ENCODE measurements at regions of chr1 and their contacts with region 1.

Region 1: DNA sequence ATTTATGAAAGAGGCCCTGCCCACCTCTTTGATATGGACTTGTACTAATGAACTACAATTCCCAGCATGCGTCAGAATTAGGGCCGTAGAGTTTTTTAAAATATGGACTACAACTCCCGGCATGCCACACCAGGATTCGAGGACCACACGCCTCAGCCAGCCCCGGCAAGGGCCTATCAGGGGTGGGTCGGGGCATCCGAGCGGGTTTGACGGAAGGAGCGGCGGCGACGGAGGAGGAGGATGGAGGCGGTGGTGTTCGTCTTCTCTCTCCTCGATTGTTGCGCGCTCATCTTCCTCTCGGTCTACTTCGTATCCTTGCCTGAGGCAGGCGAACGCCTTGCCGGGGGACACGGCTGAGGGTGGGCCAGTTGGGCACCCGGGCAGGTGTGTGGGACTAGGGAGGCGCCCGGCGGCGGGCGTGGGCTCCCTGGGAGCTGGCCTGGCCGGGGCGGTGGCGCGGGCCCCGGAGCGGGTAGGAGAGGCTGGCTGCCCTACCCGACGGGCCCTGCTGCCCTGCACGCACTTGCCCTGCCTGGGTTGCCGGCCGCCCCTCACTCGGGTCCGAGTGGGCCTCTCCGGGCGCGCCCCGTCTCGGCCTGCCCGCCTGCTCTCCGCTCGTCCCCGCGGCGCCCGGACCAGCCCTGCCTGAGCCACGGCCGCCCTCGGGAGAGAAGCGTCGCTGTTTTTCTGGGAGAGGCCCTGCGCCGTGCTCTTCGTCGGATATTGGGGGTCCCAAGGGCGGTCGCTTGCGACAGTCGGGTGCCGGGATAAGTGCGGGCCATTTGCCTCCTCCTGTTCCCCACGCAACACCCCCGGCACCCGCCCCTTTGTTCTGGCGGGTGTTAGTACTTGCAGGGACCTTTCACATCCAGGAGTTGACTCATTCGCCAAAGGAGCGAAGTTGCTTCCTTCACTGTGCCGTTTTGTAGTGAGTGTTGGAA is at the start of gene CNIH4:
- DNase-seq: peak; percentile 94
- ATAC-seq: peak; percentile 98
- H3K4me3 ChIP-seq: peak within 1 kb of the TSS; percentile 69 to 88 (median 82)
- H3K4me3 Mint-ChIP-seq: peak within 1 kb of the TSS; percentile 86
- H3K27ac ChIP-seq: peak within 1 kb of the TSS; percentile 34 to 61
- H3K27ac Mint-ChIP-seq: peak within 1 kb of the TSS; percentile 92
- H3K4me1 ChIP-seq: peaks cover 9 to 14% of the 10 kb centered on the region in 2 donors
- H3K4me1 Mint-ChIP-seq: peaks cover 22% of the 10 kb centered on the region
- H3K27me3 ChIP-seq: no peaks in the 10 kb centered on the region
- H3K27me3 Mint-ChIP-seq: no peaks in the 10 kb centered on the region
- CTCF ChIP-seq: no peak
- total RNA-seq, gene CNIH4: 27.2 and 31.5 TPM in 2 replicates

Region 2: GRCh38 chr1:224392411-224393249 is 35.7 kb after region 1 on chr1:
- CTCF ChIA-PET with region 1: no interaction called
- POLR2A ChIA-PET with region 1: no interaction called
- intact Hi-C with region 1: no loop called
- DNase-seq: no peak
- ATAC-seq: no peak
- H3K4me3 ChIP-seq: no peak overlapping the region
- H3K4me3 Mint-ChIP-seq: no peak overlapping the region
- H3K27ac ChIP-seq: no peak overlapping the region
- H3K27ac Mint-ChIP-seq: no peak overlapping the region
- H3K4me1 ChIP-seq: no peaks in the 10 kb centered on the region
- H3K4me1 Mint-ChIP-seq: no peaks in the 10 kb centered on the region
- H3K27me3 ChIP-seq: no peaks in the 10 kb centered on the region
- H3K27me3 Mint-ChIP-seq: no peaks in the 10 kb centered on the region
- CTCF ChIP-seq: no peak

Region 3: DNA sequence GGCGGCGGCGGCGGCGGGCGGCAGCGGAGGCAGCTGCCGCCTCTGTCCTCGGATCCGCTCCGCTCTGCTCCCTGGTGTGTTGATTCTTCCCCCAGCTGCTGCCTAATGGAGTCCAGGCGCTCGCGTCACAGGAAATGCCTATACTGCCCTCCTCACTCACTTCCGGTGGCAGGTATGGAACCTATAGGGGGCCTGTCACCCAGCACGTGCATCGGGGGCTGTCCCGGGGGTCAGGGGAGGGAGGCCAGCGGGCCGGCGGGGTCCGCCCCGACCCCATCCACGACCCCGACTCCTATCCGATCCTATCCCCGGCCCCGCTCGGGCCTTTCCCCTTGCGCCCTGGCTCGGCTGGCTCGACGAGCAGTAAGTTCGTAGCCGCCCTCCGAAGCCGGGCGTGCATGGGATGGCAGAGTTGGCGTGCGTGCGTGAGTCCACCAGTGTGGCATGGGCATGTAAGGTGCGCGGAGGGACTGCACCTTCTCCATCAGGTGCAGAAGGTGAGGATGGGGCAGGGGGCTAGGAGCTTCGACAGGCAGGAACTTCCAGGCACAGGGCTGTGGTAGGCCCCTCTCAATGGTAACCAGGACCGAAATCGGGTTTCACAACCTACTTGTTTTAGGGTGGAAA is 77.8 kb after region 1 on chr1 and contains the start of gene WDR26:
- CTCF ChIA-PET with region 1: no interaction called
- POLR2A ChIA-PET with region 1: no interaction called
- intact Hi-C with region 1: loop called (anchors 1 kb)
- DNase-seq: peak; percentile 91
- ATAC-seq: peak; percentile 83
- H3K4me3 ChIP-seq: peak within 1 kb of the TSS; percentile 65 to 97 (median 92)
- H3K4me3 Mint-ChIP-seq: peak within 1 kb of the TSS; percentile 99
- H3K27ac ChIP-seq: peak within 1 kb of the TSS; percentile 92 to 93
- H3K27ac Mint-ChIP-seq: peak within 1 kb of the TSS; percentile 99
- H3K4me1 ChIP-seq: peaks cover 27 to 41% of the 10 kb centered on the region in 2 donors
- H3K4me1 Mint-ChIP-seq: peaks cover 44% of the 10 kb centered on the region
- H3K27me3 ChIP-seq: no peaks in the 10 kb centered on the region
- H3K27me3 Mint-ChIP-seq: no peaks in the 10 kb centered on the region
- CTCF ChIP-seq: no peak
- total RNA-seq, gene WDR26: 108 and 111 TPM in 2 replicates

Region 4: GRCh38 chr1:224696891-224697765 is 340.2 kb after region 1 on chr1:
- CTCF ChIA-PET with region 1: no interaction called
- POLR2A ChIA-PET with region 1: no interaction called
- intact Hi-C with region 1: no loop called
- DNase-seq: no peak
- ATAC-seq: no peak
- H3K4me3 ChIP-seq: no peak overlapping the region
- H3K4me3 Mint-ChIP-seq: no peak overlapping the region
- H3K27ac ChIP-seq: no peak overlapping the region
- H3K27ac Mint-ChIP-seq: no peak overlapping the region
- H3K4me1 ChIP-seq: no peaks in the 10 kb centered on the region
- H3K4me1 Mint-ChIP-seq: no peaks in the 10 kb centered on the region
- H3K27me3 ChIP-seq: peaks cover 0 to 2% (median 0%) of the 10 kb centered on the region in 4 experiments
- H3K27me3 Mint-ChIP-seq: no peaks in the 10 kb centered on the region
- CTCF ChIP-seq: no peak

Measured in B cell (primary cell).